ENCODE measurements at regions of chr14 and their contacts with region 1.

Region 1: GRCh38 chr14:92986254-92987147 is 63.6 kb downstream of the CHGA start:
- ATAC-seq: peak in 4 of 8 experiments; percentile 32 to 50 (median 38)
- H3K4me3 ChIP-seq: no peak overlapping the region
- H3K27ac ChIP-seq: no peak overlapping the region
- H3K4me1 ChIP-seq: peaks cover 27 to 32% of the 10 kb centered on the region in 2 donors

Region 2: DNA sequence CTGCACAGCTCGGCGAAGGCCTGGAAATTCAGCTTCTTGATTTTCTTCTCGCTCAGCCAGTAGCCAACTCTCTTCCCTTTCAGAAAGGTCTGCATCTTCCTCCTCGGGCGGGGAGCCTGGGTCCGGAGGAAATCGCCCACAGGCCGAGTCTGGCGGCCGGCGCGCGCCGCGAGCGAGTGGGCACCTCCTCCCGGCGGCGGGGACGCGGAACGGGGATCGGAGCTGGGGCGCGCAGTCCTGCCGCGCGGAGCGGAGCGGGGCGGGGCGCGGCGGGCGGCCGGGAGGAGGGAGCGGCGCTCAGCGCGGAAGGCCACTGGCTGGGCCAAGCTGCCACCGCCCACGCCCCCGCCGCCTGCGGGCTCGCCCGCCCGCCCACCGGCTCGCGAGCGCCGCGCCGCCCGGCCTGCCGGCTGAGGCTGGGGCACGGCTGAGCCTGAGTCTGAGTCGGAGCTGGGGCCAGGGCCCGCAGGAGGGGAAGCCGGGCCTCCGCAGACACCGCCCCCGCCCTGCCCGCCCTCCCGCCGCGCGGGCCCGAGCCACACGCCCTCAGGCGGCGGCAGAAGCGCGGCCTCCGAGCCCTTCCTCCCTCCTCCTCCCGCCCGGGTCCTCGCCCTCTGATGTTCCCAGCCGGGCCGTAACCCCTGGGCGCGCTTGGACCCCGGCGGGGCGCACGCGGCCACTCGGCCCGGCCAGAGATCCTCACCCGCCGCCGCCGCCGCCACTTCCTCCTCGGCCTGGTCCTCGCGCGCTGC is 128.7 kb after region 1 on chr14:
- in situ Hi-C with region 1: loop called in 1 of 9 experiments (anchors 25 kb)
- ATAC-seq: peak; percentile 79 to 90 (median 86)
- H3K4me3 ChIP-seq: peak overlapping the region; percentile 51 to 88 (median 68)
- H3K27ac ChIP-seq: peak overlapping the region; percentile 81 to 90
- H3K4me1 ChIP-seq: peaks cover 14 to 22% of the 10 kb centered on the region in 2 donors